Lower lobe of right lung (tissue), 2 donors: ENCODE measurements at regions of chr21 and their contacts with region 1.

Region 1: DNA sequence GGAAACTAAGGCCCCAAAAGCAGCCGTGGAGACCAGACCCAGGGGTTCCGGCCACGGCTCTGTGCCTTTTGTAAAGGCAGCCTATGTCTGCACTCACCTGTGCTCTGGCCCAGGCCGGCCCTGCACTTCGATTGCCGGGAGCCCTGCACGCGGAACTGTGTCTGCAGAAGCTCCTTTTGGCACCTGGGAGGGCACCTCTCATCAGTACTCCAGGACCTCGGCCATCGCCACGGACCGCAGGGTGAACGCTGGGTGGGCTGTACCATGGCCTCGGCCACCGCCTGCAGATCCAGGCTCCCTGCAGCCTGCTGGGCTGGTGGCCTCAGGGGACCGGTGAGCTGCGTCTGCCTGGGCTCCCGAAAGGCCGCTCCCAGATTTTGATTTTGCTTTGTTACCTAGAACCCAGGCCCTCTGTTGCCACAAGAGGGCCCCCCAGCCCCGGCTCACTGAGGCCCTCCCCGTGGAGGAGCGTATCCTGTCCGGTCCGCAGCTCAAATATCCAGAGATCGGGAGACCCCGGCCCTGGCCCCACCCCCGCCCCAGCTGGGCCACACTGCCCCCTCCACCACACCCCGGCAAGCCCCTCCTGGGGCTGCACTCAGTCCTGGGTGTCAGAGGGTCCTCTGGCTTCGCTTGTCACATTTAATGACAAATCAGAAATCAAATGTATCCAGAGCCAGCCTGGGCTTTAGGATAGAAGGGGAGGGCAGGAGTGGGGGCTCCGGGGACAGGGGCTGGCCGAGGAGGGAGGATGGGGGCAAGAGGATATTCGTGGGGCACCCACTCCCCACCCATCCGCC is 60.2 kb upstream of the PDE9A start:
- DNase-seq: peak; percentile 75
- ATAC-seq: peak; percentile 91 to 93
- H3K4me3 ChIP-seq: no peak overlapping the region
- H3K27ac ChIP-seq: no peak overlapping the region
- H3K4me1 ChIP-seq: peaks cover 9% of the 10 kb centered on the region
- H3K27me3 ChIP-seq: no peaks in the 10 kb centered on the region
- CTCF ChIP-seq: peak; percentile 82

Region 2: DNA sequence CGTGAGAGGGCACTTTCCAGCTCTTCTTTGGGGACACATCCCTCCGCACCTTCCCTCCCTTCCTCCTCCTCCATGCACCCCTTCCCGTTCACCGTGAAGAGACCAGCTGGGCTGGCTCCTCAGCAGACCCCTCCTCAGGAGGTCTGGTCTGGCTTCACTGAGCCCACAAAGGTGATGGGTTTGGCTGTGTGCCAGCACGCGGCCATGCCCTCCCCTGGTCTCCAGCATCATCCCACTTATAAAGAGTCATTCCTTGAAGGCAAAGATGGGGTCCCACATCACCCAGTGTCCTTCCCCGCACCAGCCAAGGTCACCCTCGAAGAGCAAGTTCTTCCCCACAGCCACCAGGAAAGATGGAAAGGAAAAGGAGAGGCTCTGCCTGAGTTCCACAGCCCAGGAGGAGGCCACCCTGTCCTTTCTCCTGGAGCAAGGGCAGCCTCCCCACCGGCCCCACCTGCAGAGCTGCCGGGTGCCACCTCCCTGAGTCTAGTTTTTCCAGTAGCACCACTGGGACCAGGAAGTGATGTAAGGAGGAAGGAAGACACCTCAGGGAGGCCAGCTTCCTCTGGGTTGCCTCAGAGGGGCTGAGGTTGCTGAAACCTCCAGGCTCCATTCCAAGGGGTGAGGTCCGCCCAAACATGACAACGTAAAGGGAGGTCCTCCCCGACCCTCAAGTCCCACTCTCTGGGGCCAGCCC is 859.1 kb before region 1 on chr21:
- intact Hi-C with region 1: no loop called
- DNase-seq: no peak
- ATAC-seq: no peak
- H3K4me3 ChIP-seq: no peak overlapping the region
- H3K27ac ChIP-seq: no peak overlapping the region
- H3K4me1 ChIP-seq: no peaks in the 10 kb centered on the region
- H3K27me3 ChIP-seq: no peaks in the 10 kb centered on the region
- CTCF ChIP-seq: no peak

Region 3: DNA sequence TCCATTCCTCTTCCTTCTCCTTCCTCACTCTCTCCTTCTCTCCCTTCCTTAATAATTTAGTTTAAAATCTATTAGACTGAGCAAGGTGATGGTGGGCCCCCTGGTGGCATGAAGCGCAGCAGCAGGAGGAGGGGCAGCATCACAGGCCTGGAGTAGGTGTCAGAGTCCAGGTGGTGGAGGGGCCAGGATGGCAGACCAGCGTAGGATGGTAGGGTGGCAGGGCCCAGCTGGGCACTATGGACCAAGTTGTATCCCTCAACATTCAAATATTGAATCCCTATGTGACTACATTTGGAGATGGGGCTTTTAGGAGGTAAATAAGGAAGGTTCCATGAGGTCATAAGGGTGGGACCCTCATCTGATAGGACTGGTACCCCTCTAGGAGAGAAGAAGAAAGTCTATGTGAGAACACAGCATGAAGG is 225.1 kb after region 1 on chr21:
- intact Hi-C with region 1: loop called (anchors 10 kb)
- DNase-seq: peak; percentile 78
- ATAC-seq: peak; percentile 69 to 89
- H3K4me3 ChIP-seq: no peak overlapping the region
- H3K27ac ChIP-seq: no peak overlapping the region
- H3K4me1 ChIP-seq: no peaks in the 10 kb centered on the region
- H3K27me3 ChIP-seq: no peaks in the 10 kb centered on the region
- CTCF ChIP-seq: peak; percentile 90